PC-3 (cell line): ENCODE measurements at regions of chrX and their contacts with region 1.

Region 1: GRCh38 chrX:100395781-100396180 is 14.3 kb downstream of the PCDH19 start:
- DNase-seq: no peak
- ATAC-seq: no peak
- H3K4me3 ChIP-seq: no peak overlapping the region
- H3K27ac ChIP-seq: no peak overlapping the region
- H3K4me1 ChIP-seq: no peaks in the 10 kb centered on the region
- H3K27me3 ChIP-seq: no peaks in the 10 kb centered on the region; the same call in 1 of the 2 replicates
- CTCF ChIP-seq: no peak

Region 2: GRCh38 chrX:100883654-100884053 is 487.9 kb after region 1 on chrX:
- CTCF ChIA-PET with region 1: no interaction called
- POLR2A ChIA-PET with region 1: interaction called, 10 read pairs
- intact Hi-C with region 1: no loop called
- DNase-seq: no peak
- ATAC-seq: peak; percentile 43
- H3K4me3 ChIP-seq: no peak overlapping the region
- H3K27ac ChIP-seq: no peak overlapping the region
- H3K4me1 ChIP-seq: no peaks in the 10 kb centered on the region
- H3K27me3 ChIP-seq: no peaks in the 10 kb centered on the region
- CTCF ChIP-seq: no peak